Activated T-helper 2 cell treated with anti-CD3 and anti-CD28 coated beads, Interferon-gamma antibody, Interleukin-2, Interleukin-4, amounts not matched to agents 10 μg/mL and 5 μg/mL and 100 μg/mL, durations not matched to agents 14 hours and 24 hours and 36 hours (primary cell): ENCODE measurements at regions of chr21 and their contacts with region 1.

Region 1: DNA sequence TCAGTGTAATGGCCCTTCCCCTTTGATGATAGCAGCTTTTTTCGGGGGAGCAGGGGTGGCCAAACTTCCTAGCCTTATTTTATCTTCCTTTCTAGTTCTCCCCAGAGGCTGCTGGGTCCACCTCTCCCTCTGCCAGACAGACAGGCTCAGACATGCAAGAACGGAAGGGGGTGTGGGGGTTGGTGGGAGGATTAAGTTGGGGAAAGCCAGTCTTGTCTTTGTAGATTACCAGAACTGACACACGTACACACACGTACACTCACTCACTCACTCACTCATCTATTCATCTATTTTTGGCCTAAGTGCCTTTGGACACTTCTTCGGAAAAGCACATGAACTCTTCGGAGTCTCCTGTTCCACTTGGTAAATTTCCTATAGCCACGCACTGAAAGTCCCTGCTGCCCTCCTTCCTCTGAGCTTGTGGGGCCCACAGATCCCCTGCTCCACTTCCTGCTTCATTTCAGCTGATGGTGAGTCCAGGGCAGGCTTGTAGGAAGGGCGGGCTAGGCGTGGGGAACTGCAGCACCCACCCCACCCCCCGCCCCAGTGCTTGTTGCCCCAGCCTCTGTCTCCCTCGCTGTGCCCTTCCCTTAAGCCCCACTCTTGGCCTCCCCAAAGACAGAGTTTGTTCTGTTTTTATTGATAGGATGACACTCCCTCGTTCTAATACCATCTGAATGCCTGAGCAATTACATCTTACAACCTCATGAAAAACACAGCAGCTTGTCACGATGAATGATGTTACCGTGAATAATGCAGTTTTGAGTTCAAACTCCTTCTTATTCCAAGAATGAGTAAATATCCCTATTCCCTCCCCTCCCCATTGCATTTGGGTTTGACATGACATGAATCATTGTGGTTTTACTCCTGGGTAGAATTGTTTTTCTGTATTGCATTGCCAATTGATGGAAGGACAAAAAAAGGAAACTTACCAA is 60.7 kb upstream of the ATP5PO start:
- DNase-seq: peak; percentile 32
- H3K4me3 Mint-ChIP-seq: peak overlapping the region; percentile 72
- H3K27ac Mint-ChIP-seq: peak overlapping the region; percentile 99
- H3K4me1 Mint-ChIP-seq: peaks cover 68% of the 10 kb centered on the region
- H3K27me3 Mint-ChIP-seq: no peaks in the 10 kb centered on the region

Region 2: GRCh38 chr21:33924079-33924765 is 52.1 kb before region 1 on chr21:
- intact Hi-C with region 1: loop called (anchors 2 kb)
- DNase-seq: peak; percentile 77
- H3K4me3 Mint-ChIP-seq: no peak overlapping the region
- H3K27ac Mint-ChIP-seq: no peak overlapping the region
- H3K4me1 Mint-ChIP-seq: peaks cover 14% of the 10 kb centered on the region
- H3K27me3 Mint-ChIP-seq: no peaks in the 10 kb centered on the region

Region 3: GRCh38 chr21:34008618-34009017 is 32.3 kb after region 1 on chr21:
- intact Hi-C with region 1: loop called (anchors 1 kb)
- DNase-seq: no peak
- H3K4me3 Mint-ChIP-seq: no peak overlapping the region
- H3K27ac Mint-ChIP-seq: peak overlapping the region; percentile 60
- H3K4me1 Mint-ChIP-seq: peaks cover 18% of the 10 kb centered on the region
- H3K27me3 Mint-ChIP-seq: no peaks in the 10 kb centered on the region

Region 4: DNA sequence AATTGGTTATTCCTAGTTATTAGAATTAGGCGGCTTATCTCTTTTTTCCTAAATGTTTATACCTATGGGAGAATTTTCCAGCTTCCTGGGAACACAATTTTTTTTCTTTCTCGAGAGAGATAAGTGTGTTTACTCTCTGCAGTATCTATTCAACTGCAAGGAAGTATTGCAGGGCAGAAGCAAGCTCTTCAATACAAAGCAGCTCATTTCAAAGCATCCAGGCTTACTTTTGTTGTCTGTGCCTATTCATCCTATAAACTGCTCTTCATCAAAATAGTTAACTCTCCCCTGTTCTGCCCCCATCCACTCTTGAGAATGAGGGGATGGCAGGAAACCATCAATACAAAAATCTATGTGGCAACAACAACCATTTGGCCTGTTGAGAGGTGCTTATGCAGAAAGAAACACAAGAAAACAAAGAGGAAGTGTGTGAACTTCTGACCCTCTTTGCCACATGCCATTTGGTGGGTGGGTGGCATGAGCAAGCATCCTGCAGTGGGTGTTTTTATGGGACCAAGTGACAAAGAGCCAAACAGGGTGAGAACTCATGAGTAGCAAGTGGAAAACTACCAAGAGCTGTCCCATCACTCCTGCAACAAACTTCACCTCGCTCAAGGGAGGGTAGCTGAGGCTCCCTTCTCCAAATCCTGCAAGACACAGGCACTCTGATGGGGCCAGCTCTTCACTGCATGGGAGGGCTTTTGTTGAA is 46.4 kb after region 1 on chr21:
- intact Hi-C with region 1: loop called (anchors 1 kb)
- DNase-seq: no peak
- H3K4me3 Mint-ChIP-seq: no peak overlapping the region
- H3K27ac Mint-ChIP-seq: no peak overlapping the region
- H3K4me1 Mint-ChIP-seq: peaks cover 25% of the 10 kb centered on the region
- H3K27me3 Mint-ChIP-seq: no peaks in the 10 kb centered on the region

Region 5: GRCh38 chr21:34078915-34079314 is 102.6 kb after region 1 on chr21:
- intact Hi-C with region 1: loop called (anchors 1 kb)
- DNase-seq: no peak
- H3K4me3 Mint-ChIP-seq: peak overlapping the region; percentile 64
- H3K27ac Mint-ChIP-seq: peak overlapping the region; percentile 73
- H3K4me1 Mint-ChIP-seq: peaks cover 86% of the 10 kb centered on the region
- H3K27me3 Mint-ChIP-seq: no peaks in the 10 kb centered on the region

Region 6: DNA sequence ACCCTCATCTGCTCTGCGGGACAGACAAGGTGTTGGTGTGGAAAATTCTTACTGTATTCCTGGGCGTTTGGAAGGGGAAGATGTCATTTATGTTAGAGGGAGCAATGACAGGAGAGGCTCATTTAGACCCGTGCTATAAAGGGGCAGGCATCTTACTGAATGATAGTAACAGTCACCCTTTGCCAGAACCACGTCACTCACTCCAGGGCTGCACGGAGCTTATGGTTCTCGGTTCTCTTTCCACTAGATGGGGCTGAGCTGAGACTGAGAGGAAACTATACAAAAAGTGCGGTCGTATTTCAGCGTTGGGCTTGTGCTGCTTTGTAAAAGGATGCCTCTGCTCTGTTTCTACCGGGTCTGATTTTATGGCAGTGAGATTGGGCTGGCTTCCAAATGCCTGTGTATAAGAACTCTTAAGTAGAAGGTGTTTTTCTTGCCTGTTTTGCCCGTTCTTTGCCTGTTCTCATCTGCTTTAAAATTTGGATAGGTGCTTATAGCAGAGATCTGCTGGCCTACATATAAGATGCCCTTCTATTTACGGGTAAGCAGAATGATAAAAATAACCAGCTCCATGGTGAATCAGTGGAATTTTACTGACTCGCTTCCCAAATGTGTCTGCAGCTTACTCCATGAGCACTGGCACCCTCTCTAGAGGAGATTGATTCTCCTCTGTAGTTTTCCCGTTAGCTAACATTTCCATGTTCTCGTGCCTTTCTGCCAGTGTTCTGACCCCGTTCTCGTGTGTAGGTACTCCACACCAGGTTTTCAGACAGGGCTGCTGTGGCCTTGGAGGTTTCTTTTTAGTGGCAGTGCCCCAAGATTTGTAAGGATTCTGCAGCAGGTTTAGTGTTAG is 152.9 kb after region 1 on chr21:
- intact Hi-C with region 1: loop called (anchors 1 kb)
- DNase-seq: peak; percentile 71
- H3K4me3 Mint-ChIP-seq: peak overlapping the region; percentile 64
- H3K27ac Mint-ChIP-seq: peak overlapping the region; percentile 94
- H3K4me1 Mint-ChIP-seq: peaks cover 70% of the 10 kb centered on the region
- H3K27me3 Mint-ChIP-seq: no peaks in the 10 kb centered on the region

Region 7: DNA sequence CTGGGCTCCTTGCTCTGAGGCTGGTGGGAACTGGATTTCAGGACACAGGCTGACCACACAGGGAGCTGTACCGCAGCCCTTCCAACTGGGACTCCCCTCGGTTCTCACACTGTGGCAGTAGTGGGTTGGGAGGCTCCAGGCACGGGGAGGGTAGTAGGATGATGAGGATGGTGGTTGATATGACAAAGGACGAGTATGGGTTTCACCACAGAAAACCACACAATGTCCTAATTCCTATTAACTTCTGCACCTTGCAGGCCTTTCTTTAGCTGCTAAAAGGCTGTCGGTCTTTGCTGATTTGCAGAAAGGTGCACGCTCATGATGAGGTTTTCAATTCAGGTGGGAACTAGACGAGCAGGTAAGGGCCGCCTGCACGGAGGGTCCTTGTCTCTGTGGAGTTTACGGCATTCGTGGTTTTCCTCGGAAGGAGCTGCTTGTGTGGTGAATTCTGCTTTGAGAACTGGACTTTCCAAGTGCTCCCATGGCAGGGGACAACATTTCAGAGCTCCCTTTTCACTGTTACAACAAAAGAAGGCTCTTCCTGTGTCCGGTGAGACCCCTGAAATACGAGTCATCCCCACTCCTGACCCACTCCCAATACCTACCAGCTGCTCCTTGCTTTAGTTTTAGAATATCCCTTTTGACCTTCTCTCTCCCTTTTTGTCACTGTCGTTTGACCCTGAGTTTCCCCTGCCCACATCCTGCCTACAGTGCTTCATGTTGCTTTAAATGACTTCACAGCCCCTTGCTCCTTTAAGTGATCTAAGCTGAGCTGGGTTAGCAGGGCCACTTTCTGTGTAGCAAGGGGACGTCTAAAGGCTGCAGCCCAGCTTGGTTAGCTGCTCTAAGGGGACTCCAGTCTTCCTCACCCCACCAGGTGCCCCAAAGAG is 222.1 kb after region 1 on chr21:
- intact Hi-C with region 1: loop called (anchors 2 kb)
- DNase-seq: peak; percentile 35
- H3K4me3 Mint-ChIP-seq: peak overlapping the region; percentile 26
- H3K27ac Mint-ChIP-seq: peak overlapping the region; percentile 94
- H3K4me1 Mint-ChIP-seq: peaks cover 55% of the 10 kb centered on the region
- H3K27me3 Mint-ChIP-seq: no peaks in the 10 kb centered on the region